Adrenal gland (tissue), 19 donors: ENCODE measurements at regions of chr3 and their contacts with region 1.

Region 1: DNA sequence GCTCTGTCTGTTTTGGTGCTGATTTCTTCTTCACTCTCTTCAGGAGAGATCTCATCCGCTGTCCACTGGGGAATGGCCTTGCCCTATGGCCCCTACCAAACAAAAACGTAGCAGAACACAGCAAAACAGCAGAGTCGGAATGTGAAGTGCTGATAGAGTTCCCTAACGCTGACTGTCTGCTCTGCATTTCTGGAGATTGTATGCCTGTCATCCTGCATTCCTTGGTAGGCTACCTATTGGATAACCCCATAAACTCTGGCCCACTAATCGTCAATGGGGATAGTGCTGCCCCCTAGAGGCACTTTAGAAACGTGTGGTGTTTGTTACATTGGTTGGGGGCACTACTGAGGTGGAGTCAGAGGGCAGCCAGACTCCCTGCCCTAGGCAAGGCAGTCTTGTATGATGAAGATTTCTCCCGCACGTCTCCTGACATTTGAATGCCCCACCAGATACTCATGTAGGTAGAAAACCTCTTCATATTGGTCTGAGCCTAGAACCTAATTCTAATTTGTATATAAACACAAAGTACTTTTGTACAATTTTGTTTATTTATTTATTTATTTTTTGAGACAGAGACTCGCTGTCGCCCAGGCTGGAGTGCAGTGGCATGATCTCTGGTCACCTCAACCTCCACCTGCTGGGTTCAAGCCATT is 15.6 kb upstream of the MAGEF1 start:
- DNase-seq: peak; percentile 56 to 84 (median 67)
- H3K4me3 ChIP-seq: no peak overlapping the region
- H3K27ac ChIP-seq: no peak overlapping the region
- H3K4me1 ChIP-seq: no peaks in the 10 kb centered on the region
- H3K27me3 ChIP-seq: no peaks in the 10 kb centered on the region
- CTCF ChIP-seq: peak; percentile 65 to 78 (median 76)
- POLR2A ChIP-seq: no peak

Region 2: DNA sequence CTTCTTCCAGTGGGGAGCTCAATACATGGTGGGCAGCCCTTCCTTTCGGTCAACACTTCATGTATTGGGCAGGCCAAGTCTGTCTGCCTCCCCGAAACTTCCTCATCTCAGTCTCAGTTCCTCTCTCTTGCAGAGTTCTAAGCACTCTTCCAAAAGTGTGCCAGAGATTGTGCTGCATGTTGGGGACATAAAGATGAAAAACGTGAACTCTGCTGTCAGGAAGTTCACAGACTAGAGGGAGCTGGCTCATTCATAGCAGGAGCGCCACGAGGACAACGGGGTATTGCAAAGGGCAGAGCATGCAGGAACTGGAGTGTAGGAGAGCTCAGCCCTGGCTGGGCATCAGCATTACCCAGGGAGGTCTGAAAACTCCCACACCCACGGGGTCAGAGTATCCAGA is 181.2 kb before region 1 on chr3:
- intact Hi-C with region 1: no loop called
- DNase-seq: peak in 3 of 7 donors; percentile 28 to 54 (median 41)
- H3K4me3 ChIP-seq: no peak overlapping the region
- H3K27ac ChIP-seq: no peak overlapping the region
- H3K4me1 ChIP-seq: peaks cover 0 to 5% of the 10 kb centered on the region in 2 donors
- H3K27me3 ChIP-seq: peaks cover 5% of the 10 kb centered on the region
- CTCF ChIP-seq: no peak
- POLR2A ChIP-seq: no peak

Region 3: GRCh38 chr3:184777336-184778004 is 50.0 kb after region 1 on chr3:
- intact Hi-C with region 1: loop called in 1 of 2 experiments (anchors 10 kb)
- DNase-seq: peak; percentile 89 to 99 (median 97)
- H3K4me3 ChIP-seq: no peak overlapping the region
- H3K27ac ChIP-seq: no peak overlapping the region
- H3K4me1 ChIP-seq: no peaks in the 10 kb centered on the region
- H3K27me3 ChIP-seq: no peaks in the 10 kb centered on the region
- CTCF ChIP-seq: peak; percentile 74 to 97 (median 94)
- POLR2A ChIP-seq: no peak